HepG2 (cell line): ENCODE measurements at regions of chr5 and their contacts with region 1.

Region 1: GRCh38 chr5:108148715-108149139 is 233.2 kb downstream of the FBXL17 start:
- DNase-seq: peak; percentile 5
- ATAC-seq: peak; percentile 84
- H3K4me3 ChIP-seq: no peak overlapping the region
- H3K27ac ChIP-seq: no peak overlapping the region
- H3K4me1 ChIP-seq: no peaks in the 10 kb centered on the region
- H3K27me3 ChIP-seq: no peaks in the 10 kb centered on the region
- CTCF ChIP-seq: peak; percentile 44
- EP300 ChIP-seq: no peak
- POLR2A ChIP-seq: no peak
- RAD21 ChIP-seq: no peak

Region 2: DNA sequence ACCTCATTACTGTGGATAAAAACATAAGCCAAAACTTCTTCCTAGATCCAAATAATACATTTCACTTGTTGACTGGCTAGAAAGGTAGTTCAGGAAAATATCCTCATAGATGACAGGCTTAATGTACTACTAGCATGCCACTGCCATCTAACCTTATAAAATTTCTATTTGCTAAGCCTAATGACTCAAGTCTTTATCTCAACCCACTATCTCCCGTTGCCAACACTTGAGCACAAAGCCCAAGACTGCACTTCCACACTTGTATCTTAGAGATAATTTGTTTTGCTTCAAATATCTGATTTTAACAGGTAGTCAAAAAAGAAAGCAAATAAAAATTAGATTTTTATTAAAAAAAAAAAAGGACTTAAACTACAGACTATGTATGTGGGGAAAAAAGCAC is 190.5 kb after region 1 on chr5:
- CTCF ChIA-PET with region 1: no interaction called
- POLR2A ChIA-PET with region 1: no interaction called
- in situ Hi-C with region 1: loop called (anchors 10 kb)
- intact Hi-C with region 1: no loop called
- DNase-seq: no peak
- ATAC-seq: no peak
- H3K4me3 ChIP-seq: no peak overlapping the region
- H3K27ac ChIP-seq: no peak overlapping the region
- H3K4me1 ChIP-seq: no peaks in the 10 kb centered on the region
- H3K27me3 ChIP-seq: no peaks in the 10 kb centered on the region
- CTCF ChIP-seq: no peak
- EP300 ChIP-seq: no peak
- POLR2A ChIP-seq: no peak
- RAD21 ChIP-seq: no peak

Region 3: DNA sequence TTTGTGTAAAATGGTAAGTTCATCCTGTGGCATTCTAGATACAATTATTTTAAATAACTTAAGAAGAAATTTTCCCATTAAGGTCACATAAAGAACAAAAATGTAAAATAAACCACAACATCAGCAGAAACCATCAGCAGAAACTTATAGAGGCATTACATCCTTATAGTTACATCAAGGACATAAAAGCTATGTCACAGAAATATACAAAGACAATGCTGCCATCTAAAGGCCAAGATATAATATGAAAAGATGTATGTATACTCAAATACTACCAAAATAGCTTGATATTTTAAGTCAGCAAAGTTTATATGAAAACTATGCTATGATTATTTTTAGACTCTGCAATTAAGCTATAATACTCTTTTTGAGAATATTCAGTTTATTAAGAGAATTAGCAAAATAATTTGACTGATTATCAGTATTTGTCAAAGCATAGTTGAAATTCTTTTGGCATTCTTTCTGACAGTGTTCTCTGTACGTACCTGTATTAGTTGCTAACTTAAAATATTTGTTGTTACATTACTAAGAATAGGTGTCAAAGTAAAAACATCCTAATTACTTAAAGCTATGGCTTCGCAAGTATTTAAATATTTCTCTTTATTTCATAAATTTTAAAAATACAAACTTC is 196.9 kb after region 1 on chr5:
- CTCF ChIA-PET with region 1: interaction called, 3 read pairs
- POLR2A ChIA-PET with region 1: no interaction called
- in situ Hi-C with region 1: no loop called
- intact Hi-C with region 1: loop called (anchors 1 kb)
- DNase-seq: peak; percentile 43
- ATAC-seq: peak; percentile 65; the same call in 2 of the 3 replicates
- H3K4me3 ChIP-seq: no peak overlapping the region
- H3K27ac ChIP-seq: no peak overlapping the region
- H3K4me1 ChIP-seq: no peaks in the 10 kb centered on the region
- H3K27me3 ChIP-seq: no peaks in the 10 kb centered on the region
- CTCF ChIP-seq: peak; percentile 56
- EP300 ChIP-seq: no peak
- POLR2A ChIP-seq: no peak
- RAD21 ChIP-seq: 0 out of 2 replicates have a peak, but pooled peaks have one; percentile 19